GM12878 (cell line): ENCODE measurements at regions of chr14 and their contacts with region 1.

Region 1: DNA sequence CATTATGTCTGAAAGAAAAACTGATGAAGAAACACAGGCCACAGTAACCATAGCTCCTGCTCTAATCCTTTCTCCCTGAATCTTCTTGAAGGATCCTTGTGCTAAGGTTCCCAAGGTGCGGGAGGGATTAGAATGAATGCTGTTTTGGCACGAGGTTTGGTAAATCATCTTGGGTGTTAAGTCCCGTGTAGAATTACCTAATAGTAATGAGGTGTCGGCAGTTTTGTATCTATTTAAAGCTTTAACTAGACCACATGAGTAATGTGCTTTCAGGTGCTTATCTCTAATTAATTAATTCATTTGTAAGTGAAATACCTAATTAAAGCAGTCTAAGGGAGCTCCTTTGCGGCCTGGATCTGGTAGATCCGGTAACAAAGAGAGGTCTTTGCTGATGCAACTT is 53.9 kb downstream of the GNG2 start:
- DNase-seq: no peak
- ATAC-seq: no peak
- H3K4me3 ChIP-seq: no peak overlapping the region
- H3K27ac ChIP-seq: no peak overlapping the region
- H3K4me1 ChIP-seq: no peaks in the 10 kb centered on the region
- H3K27me3 ChIP-seq: no peaks in the 10 kb centered on the region
- CTCF ChIP-seq: no peak
- EP300 ChIP-seq: no peak
- POLR2A ChIP-seq: no peak
- RAD21 ChIP-seq: no peak

Region 2: GRCh38 chr14:51901475-51902024 is 12.8 kb before region 1 on chr14:
- CTCF ChIA-PET with region 1: interaction called, 6 read pairs
- POLR2A ChIA-PET with region 1: interaction called, 3 read pairs
- RAD21 ChIA-PET with region 1: no interaction called
- SMC1A ChIA-PET with region 1: interaction called, 15 read pairs
- in situ Hi-C with region 1: no loop called
- intact Hi-C with region 1: no loop called
- DNase-seq: no peak
- ATAC-seq: no peak
- H3K4me3 ChIP-seq: no peak overlapping the region
- H3K27ac ChIP-seq: no peak overlapping the region
- H3K4me1 ChIP-seq: no peaks in the 10 kb centered on the region
- H3K27me3 ChIP-seq: no peaks in the 10 kb centered on the region
- CTCF ChIP-seq: no peak
- EP300 ChIP-seq: no peak
- POLR2A ChIP-seq: no peak
- RAD21 ChIP-seq: no peak